K562 (cell line): ENCODE measurements at regions of chr5 and their contacts with region 1.

Region 1: GRCh38 chr5:168987543-168988300 is 313.2 kb downstream of the SLIT3 start:
- DNase-seq: peak; percentile 56 to 64 (median 63)
- ATAC-seq: peak; percentile 86
- H3K4me3 ChIP-seq: no peak overlapping the region
- H3K27ac ChIP-seq: no peak overlapping the region
- H3K4me1 ChIP-seq: no peaks in the 10 kb centered on the region
- H3K27me3 ChIP-seq: no peaks in the 10 kb centered on the region
- CTCF ChIP-seq: peak; percentile 66 to 85 (median 78)
- EP300 ChIP-seq: no peak
- POLR2A ChIP-seq: no peak
- RAD21 ChIP-seq: peak; percentile 70 to 80

Region 2: DNA sequence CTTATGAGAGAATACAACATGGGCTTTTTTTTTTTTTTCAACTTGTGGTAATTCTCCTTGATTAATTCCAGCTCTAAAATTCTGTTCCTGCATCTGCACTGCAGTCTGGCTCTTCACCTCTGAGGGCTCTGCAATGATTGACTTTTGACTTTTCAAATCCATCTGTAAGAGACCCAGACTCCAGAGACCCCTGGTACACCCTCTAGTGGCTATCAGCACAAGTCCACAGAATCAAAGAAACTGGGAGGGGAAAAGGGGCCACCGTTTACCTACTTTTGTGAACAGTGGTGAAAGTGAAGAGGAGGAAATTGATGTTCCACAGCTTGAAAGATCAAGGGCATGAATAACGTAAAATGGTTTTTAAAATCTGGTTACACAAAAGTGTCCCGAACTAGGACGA is 161.6 kb after region 1 on chr5:
- CTCF ChIA-PET with region 1: no interaction called
- POLR2A ChIA-PET with region 1: no interaction called
- in situ Hi-C with region 1: no loop called
- intact Hi-C with region 1: loop called (anchors 5 kb)
- DNase-seq: peak in 2 of 4 experiments; percentile 3 to 7
- ATAC-seq: no peak
- H3K4me3 ChIP-seq: no peak overlapping the region
- H3K27ac ChIP-seq: no peak overlapping the region
- H3K4me1 ChIP-seq: no peaks in the 10 kb centered on the region
- H3K27me3 ChIP-seq: peaks cover 3 to 8% of the 10 kb centered on the region in 2 experiments; a peak in 3 of 5 replicates
- CTCF ChIP-seq: peak in 2 of 3 experiments; percentile 16 to 23; a peak in 2 of 6 replicates
- EP300 ChIP-seq: no peak
- POLR2A ChIP-seq: no peak
- RAD21 ChIP-seq: no peak

Region 3: GRCh38 chr5:169302491-169303118 is 314.9 kb after region 1 on chr5:
- CTCF ChIA-PET with region 1: interaction called, 3 read pairs
- POLR2A ChIA-PET with region 1: no interaction called
- in situ Hi-C with region 1: loop called (anchors 10 kb)
- intact Hi-C with region 1: loop called (anchors 1 kb)
- DNase-seq: peak; percentile 67 to 78 (median 71)
- ATAC-seq: peak; percentile 94
- H3K4me3 ChIP-seq: no peak overlapping the region
- H3K27ac ChIP-seq: no peak overlapping the region
- H3K4me1 ChIP-seq: peaks cover 0 to 7% of the 10 kb centered on the region in 2 experiments; a peak in 1 of 5 replicates
- H3K27me3 ChIP-seq: peaks cover 0 to 16% of the 10 kb centered on the region in 2 experiments; a peak in 3 of 5 replicates
- CTCF ChIP-seq: peak; percentile 70 to 88 (median 84)
- EP300 ChIP-seq: no peak
- POLR2A ChIP-seq: no peak
- RAD21 ChIP-seq: peak; percentile 67 to 69

Region 4: GRCh38 chr5:169318556-169318955 is 330.8 kb after region 1 on chr5:
- CTCF ChIA-PET with region 1: no interaction called
- POLR2A ChIA-PET with region 1: no interaction called
- in situ Hi-C with region 1: no loop called
- intact Hi-C with region 1: no loop called
- DNase-seq: no peak
- ATAC-seq: no peak
- H3K4me3 ChIP-seq: no peak overlapping the region
- H3K27ac ChIP-seq: no peak overlapping the region
- H3K4me1 ChIP-seq: no peaks in the 10 kb centered on the region
- H3K27me3 ChIP-seq: no peaks in the 10 kb centered on the region
- CTCF ChIP-seq: no peak
- EP300 ChIP-seq: no peak
- POLR2A ChIP-seq: no peak
- RAD21 ChIP-seq: no peak

Region 5: DNA sequence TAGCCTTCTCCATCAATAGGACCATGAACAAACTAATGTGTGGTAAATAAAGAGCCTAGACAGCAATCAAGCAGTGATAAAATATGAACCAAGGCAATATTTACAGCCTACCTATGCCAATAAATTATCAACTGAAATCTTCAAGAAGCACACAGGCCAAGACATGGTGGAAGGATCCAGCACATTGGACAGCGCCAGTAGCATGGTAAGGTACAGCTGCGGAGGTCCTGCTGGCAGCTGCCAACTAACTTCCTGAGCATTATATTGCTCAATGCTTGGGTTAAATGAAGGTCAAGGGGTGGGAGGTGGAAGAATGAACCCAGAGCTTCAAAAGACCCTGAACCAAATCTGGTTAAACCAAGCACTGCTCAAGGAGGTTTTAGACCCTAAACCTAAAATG is 579.4 kb after region 1 on chr5:
- CTCF ChIA-PET with region 1: no interaction called
- POLR2A ChIA-PET with region 1: no interaction called
- in situ Hi-C with region 1: loop called (anchors 10 kb)
- intact Hi-C with region 1: no loop called
- DNase-seq: no peak
- ATAC-seq: no peak
- H3K4me3 ChIP-seq: no peak overlapping the region
- H3K27ac ChIP-seq: no peak overlapping the region
- H3K4me1 ChIP-seq: no peaks in the 10 kb centered on the region
- H3K27me3 ChIP-seq: peaks cover 0 to 2% of the 10 kb centered on the region in 2 experiments; a peak in 1 of 5 replicates
- CTCF ChIP-seq: no peak
- EP300 ChIP-seq: no peak
- POLR2A ChIP-seq: no peak
- RAD21 ChIP-seq: no peak

Region 6: GRCh38 chr5:169583424-169584204 is 595.9 kb after region 1 on chr5 and contains the start of gene SPDL1:
- CTCF ChIA-PET with region 1: no interaction called
- POLR2A ChIA-PET with region 1: no interaction called
- in situ Hi-C with region 1: no loop called
- intact Hi-C with region 1: loop called (anchors 1 kb)
- DNase-seq: peak; percentile 94 to 98 (median 97)
- ATAC-seq: peak; percentile 97
- H3K4me3 ChIP-seq: peak within 1 kb of the TSS; percentile 65
- H3K27ac ChIP-seq: peak within 1 kb of the TSS; percentile 81
- H3K4me1 ChIP-seq: peaks cover 2 to 7% of the 10 kb centered on the region in 2 experiments; a peak in 3 of 5 replicates
- H3K27me3 ChIP-seq: no peaks in the 10 kb centered on the region
- CTCF ChIP-seq: peak in 1 of 3 experiments; percentile 25; a peak in 1 of 6 replicates
- EP300 ChIP-seq: no peak
- POLR2A ChIP-seq: peak; percentile 95
- RAD21 ChIP-seq: no peak
- polyA plus RNA-seq, gene SPDL1: 32.4 to 51.4 TPM

Region 7: DNA sequence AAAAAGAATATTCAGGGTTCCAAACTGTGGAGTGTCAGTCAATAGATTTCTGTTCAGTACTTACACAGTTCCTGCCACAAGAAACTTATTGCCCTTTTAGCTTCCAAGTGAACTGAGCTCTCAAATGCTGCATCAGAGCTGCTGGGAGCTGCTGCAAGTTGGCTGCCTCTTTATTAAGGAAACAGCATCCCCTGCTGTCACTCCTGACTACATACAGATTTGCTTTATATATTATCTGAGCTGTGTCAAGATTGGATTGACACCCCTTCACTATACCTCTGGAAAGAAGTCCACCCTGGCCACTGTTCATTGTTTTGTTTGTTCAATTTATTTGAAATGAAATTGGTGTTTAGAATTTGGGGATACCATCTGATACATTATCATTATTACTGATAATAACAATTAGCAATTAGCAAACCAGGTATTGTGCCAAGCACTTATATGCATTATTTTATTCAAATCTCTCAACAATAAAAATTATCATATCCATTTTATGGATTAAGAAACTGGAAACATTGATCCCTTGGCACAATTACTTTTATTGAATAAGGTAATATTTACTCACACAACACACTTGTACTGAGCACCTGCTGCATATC is 1228.6 kb after region 1 on chr5:
- CTCF ChIA-PET with region 1: no interaction called
- POLR2A ChIA-PET with region 1: no interaction called
- in situ Hi-C with region 1: loop called (anchors 25 kb)
- intact Hi-C with region 1: no loop called
- DNase-seq: peak; percentile 17 to 53 (median 38)
- ATAC-seq: peak; percentile 78
- H3K4me3 ChIP-seq: no peak overlapping the region
- H3K27ac ChIP-seq: no peak overlapping the region
- H3K4me1 ChIP-seq: no peaks in the 10 kb centered on the region
- H3K27me3 ChIP-seq: peaks cover 0 to 5% of the 10 kb centered on the region in 2 experiments; a peak in 2 of 5 replicates
- CTCF ChIP-seq: peak; percentile 68 to 91 (median 69)
- EP300 ChIP-seq: no peak
- POLR2A ChIP-seq: no peak
- RAD21 ChIP-seq: peak; percentile 96 to 97